Mucosa of descending colon (tissue), 3 donors: ENCODE measurements at regions of chr6 and their contacts with region 1.

Region 1: GRCh38 chr6:5143634-5144311 is 58.6 kb downstream of the PPP1R3G start:
- DNase-seq: peak; percentile 78 to 98 (median 90)
- ATAC-seq: peak; percentile 88
- H3K4me3 ChIP-seq: no peak overlapping the region
- H3K4me1 ChIP-seq: no peaks in the 10 kb centered on the region
- CTCF ChIP-seq: peak; percentile 52

Region 2: DNA sequence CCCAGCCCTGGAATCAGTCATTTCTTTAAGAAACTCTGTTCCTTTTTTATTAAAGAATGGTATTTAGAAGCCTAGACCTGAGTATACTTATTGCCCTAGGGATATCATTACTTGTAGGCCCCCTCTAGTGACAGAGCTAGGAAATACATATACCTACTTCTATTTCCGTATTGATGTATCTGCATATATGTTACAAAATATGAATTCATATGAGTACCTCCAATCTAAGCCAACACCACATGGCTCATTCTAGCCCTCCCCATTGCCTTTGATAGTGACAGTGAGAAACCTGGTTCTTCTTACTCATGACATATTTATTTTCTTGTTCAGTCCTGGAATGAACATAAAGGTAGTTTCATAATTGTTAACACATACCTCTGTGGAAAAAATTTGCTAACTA is 254.8 kb after region 1 on chr6:
- intact Hi-C with region 1: loop called in 1 of 2 experiments (anchors 10 kb)
- DNase-seq: peak in 1 of 3 donors; percentile 5
- ATAC-seq: peak; percentile 54
- H3K4me3 ChIP-seq: no peak overlapping the region
- H3K4me1 ChIP-seq: no peaks in the 10 kb centered on the region
- CTCF ChIP-seq: no peak

Region 3: GRCh38 chr6:6547110-6547879 is 1403.5 kb after region 1 on chr6:
- intact Hi-C with region 1: loop called in 1 of 2 experiments (anchors 10 kb)
- DNase-seq: peak; percentile 77 to 87 (median 87)
- ATAC-seq: peak; percentile 96
- H3K4me3 ChIP-seq: no peak overlapping the region
- H3K4me1 ChIP-seq: peaks cover 10% of the 10 kb centered on the region
- CTCF ChIP-seq: peak; percentile 83